ENCODE measurements at regions of chr11 and their contacts with region 1.

Region 1: GRCh38 chr11:10933455-10934292 is 75.8 kb upstream of the ZBED5 start:
- DNase-seq: peak; percentile 97
- H3K4me3 ChIP-seq: peak overlapping the region; percentile 9 to 48 (median 44)
- H3K27ac ChIP-seq: peak overlapping the region; percentile 78 to 100 (median 98)
- H3K4me1 ChIP-seq: peaks cover 0 to 61% (median 55%) of the 10 kb centered on the region in 4 donors
- H3K27me3 ChIP-seq: no peaks in the 10 kb centered on the region
- CTCF ChIP-seq: peak; percentile 97 to 99 (median 99)
- EP300 ChIP-seq: no peak
- POLR2A ChIP-seq: peak in 1 of 2 donors; percentile 14

Region 2: DNA sequence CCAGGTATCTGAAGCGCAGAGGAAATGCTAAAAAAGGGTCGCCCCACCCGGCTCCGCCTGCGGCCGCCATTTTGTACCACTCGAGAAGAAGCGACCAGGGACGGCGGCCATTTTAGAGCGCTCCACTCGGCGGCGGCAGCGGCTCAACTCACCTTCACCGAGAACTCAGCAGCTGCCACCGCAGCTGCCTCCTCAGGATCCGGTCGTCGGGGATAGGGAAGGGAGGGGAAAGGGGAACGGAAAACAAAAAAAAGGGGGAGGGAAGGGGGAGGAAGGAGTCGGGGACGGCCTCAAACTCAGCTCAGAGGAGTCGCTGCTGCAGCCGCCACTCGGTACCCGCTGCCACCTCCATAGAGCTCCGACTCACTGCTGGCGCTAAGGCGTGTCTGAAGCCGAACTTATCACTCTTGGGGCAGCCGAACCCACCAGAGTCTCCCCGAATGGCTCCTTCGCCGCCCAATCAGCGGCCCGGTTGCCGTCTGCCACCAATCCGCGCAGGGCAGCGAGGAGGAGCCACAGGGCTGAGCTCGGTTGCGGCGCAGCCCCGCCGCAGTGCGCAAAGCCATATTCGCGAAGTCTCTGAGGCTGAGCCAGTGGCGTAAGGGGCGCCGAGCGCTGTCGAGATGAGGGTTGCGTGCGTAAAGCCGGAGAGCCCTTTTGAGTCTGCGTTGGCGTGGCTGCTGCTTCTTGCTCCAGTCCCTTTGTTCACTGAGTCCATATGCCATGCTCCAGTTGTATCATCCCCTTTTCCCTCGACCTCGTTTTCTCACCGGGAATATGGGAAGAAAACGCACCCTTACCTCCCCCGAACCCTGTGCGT is 124.9 kb before region 1 on chr11 and contains the start of gene EIF4G2:
- intact Hi-C with region 1: loop called (anchors 2 kb)
- DNase-seq: peak; percentile 99
- H3K4me3 ChIP-seq: peak within 1 kb of the TSS; percentile 83 to 99 (median 94)
- H3K27ac ChIP-seq: peak within 1 kb of the TSS; percentile 97 to 100 (median 98)
- H3K4me1 ChIP-seq: peaks cover 0 to 43% (median 39%) of the 10 kb centered on the region in 4 donors
- H3K27me3 ChIP-seq: no peaks in the 10 kb centered on the region
- CTCF ChIP-seq: no peak
- EP300 ChIP-seq: peak in 1 of 4 donors; percentile 27
- POLR2A ChIP-seq: peak; percentile 98 to 99
- total RNA-seq, gene EIF4G2: 425 to 581 (median 497) TPM

Region 3: DNA sequence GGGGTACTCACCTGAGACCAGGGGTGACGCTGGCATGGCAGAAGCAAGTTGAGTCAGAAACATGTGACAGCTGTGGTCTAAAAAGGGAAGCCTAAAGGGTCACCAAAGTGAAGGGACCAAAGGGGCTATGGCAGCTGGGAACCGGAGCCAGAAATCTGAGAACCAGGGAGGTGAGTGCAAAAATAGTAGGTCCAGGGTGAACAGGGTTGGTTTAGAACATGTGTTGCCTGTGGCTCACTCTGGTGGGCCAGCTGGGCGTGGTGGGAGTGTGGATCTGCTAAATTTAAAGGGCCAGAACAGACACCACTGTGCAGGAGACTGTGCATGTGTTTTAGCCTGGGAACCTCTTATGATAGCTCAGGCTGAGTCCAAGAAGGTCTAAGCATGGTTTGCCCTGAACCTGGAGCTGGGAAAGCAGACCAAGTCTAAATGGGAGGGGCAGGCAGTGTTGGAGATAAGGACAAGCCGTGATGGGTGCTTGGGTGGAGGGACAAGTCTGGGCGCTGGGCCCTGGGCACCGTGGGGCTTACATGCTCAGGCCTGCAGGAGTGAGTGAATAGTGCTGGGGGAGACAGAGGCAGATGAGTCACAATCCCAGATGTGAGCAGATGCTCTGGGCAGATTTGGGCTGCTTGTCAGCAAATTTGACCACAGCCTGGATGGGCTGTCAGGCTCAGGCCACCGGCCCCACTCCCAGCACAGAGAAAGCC is 34.4 kb before region 1 on chr11:
- intact Hi-C with region 1: loop called (anchors 2 kb)
- DNase-seq: peak; percentile 85
- H3K4me3 ChIP-seq: no peak overlapping the region
- H3K27ac ChIP-seq: peak overlapping the region; percentile 84 to 94 (median 92)
- H3K4me1 ChIP-seq: peaks cover 0 to 49% (median 38%) of the 10 kb centered on the region in 4 donors
- H3K27me3 ChIP-seq: no peaks in the 10 kb centered on the region
- CTCF ChIP-seq: no peak
- EP300 ChIP-seq: no peak
- POLR2A ChIP-seq: no peak

Region 4: GRCh38 chr11:10920205-10920604 is 13.5 kb before region 1 on chr11:
- intact Hi-C with region 1: no loop called
- DNase-seq: no peak
- H3K4me3 ChIP-seq: no peak overlapping the region
- H3K27ac ChIP-seq: no peak overlapping the region
- H3K4me1 ChIP-seq: peaks cover 0 to 26% (median 12%) of the 10 kb centered on the region in 4 donors
- H3K27me3 ChIP-seq: no peaks in the 10 kb centered on the region
- CTCF ChIP-seq: no peak
- EP300 ChIP-seq: no peak
- POLR2A ChIP-seq: no peak

Region 5: DNA sequence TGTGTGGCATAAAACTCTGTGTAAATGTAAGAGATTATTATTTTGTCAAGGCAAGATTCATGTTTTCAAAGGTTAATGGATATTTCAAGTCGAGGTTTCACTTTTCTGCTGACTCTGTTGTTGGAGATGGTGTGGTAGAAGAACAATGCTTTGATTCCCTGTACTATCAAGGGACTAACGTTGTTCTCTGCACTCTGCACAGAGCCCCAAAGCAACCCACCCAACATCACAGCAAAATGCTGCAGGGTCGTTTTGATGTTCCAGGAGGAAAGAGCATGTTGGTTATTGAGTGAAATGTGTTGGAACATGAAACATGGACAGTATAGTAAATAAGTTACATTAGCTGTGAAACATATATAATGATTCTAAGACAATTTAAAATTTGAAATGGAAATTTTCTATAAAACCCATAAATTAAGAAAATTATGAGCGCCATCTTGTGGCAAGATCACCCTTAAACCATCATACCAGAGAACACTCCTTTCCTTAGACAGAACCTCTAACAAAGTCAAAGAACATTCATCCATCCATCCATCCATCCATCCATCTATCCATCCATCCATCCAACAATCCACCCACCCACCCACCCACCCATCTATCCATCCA is 88.6 kb after region 1 on chr11:
- intact Hi-C with region 1: loop called (anchors 1 kb)
- DNase-seq: no peak
- H3K4me3 ChIP-seq: no peak overlapping the region
- H3K27ac ChIP-seq: no peak overlapping the region
- H3K4me1 ChIP-seq: no peaks in the 10 kb centered on the region
- H3K27me3 ChIP-seq: no peaks in the 10 kb centered on the region
- CTCF ChIP-seq: peak in 3 of 4 experiments; percentile 39 to 47 (median 43)
- EP300 ChIP-seq: no peak
- POLR2A ChIP-seq: no peak

Region 6: DNA sequence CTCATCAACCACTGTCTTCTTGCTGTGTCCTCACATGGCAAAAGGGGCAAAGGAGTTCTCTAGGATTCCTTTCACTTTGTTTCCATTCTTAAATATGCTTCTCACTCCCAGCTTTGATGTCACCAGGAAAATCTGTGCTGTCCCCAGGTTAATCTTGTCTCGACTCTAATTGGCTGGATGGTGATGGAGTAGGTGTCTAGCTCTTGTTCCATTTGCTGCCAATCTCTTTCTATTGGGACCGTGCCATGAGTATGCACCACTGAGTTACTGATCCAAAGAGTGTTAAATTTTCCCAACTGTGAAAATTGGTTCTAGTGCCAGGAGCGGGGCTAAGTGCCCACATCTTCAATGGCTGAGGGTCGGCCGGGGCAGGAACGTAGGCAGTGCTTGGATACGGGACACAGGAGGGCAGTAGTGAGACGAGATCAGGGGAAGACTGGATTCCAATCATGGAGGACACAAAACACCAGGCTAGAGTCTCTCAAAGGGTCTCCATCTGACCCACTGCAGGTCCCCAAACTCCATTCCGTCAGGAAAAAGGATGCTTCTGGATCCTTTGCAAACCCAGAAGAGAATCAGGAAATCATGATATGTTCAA is 467.1 kb after region 1 on chr11:
- intact Hi-C with region 1: loop called (anchors 5 kb)
- DNase-seq: no peak
- H3K4me3 ChIP-seq: no peak overlapping the region
- H3K27ac ChIP-seq: peak overlapping the region in 1 of 4 donors; percentile 94
- H3K4me1 ChIP-seq: peaks cover 0 to 62% (median 46%) of the 10 kb centered on the region in 4 donors
- H3K27me3 ChIP-seq: no peaks in the 10 kb centered on the region
- CTCF ChIP-seq: no peak
- EP300 ChIP-seq: no peak
- POLR2A ChIP-seq: no peak

Region 7: GRCh38 chr11:11787305-11788062 is 853.8 kb after region 1 on chr11:
- intact Hi-C with region 1: loop called (anchors 2 kb)
- DNase-seq: peak; percentile 85
- H3K4me3 ChIP-seq: no peak overlapping the region
- H3K27ac ChIP-seq: peak overlapping the region in 1 of 4 donors; percentile 9
- H3K4me1 ChIP-seq: peaks cover 0 to 3% (median 0%) of the 10 kb centered on the region in 4 donors
- H3K27me3 ChIP-seq: no peaks in the 10 kb centered on the region
- CTCF ChIP-seq: peak; percentile 87 to 92 (median 88)
- EP300 ChIP-seq: no peak
- POLR2A ChIP-seq: no peak